CD4-positive, alpha-beta T cell (primary cell): ENCODE measurements at regions of chr1 and their contacts with region 1.

Region 1: DNA sequence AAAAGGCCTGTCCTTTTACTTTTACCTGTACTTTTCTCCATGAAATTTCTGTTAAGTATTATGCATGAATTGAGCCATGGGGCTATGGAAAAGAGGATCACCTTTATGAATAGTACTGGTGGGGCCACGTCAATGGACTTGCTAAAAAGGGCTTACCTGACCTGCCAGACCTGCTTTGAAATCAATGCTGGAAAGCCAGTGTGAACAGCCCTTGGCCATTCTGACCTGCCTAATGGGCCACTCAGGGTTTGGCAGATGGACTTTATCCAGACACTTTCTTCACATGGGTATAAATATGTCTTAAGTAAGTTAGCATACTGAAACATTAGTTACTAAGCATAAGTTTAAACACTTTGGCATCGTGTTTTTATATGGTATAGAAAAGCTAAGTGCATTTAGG is 8.3 kb upstream of the GUK1 start:
- DNase-seq: no peak
- ATAC-seq: no peak
- H3K4me3 ChIP-seq: no peak overlapping the region
- H3K4me3 Mint-ChIP-seq: no peak overlapping the region
- H3K27ac ChIP-seq: no peak overlapping the region
- H3K27ac Mint-ChIP-seq: no peak overlapping the region
- H3K4me1 ChIP-seq: peaks cover 4% of the 10 kb centered on the region
- H3K4me1 Mint-ChIP-seq: peaks cover 5% of the 10 kb centered on the region
- H3K27me3 ChIP-seq: peaks cover 4 to 8% of the 10 kb centered on the region in 2 experiments
- H3K27me3 Mint-ChIP-seq: peaks cover 22% of the 10 kb centered on the region
- CTCF ChIP-seq: no peak

Region 2: DNA sequence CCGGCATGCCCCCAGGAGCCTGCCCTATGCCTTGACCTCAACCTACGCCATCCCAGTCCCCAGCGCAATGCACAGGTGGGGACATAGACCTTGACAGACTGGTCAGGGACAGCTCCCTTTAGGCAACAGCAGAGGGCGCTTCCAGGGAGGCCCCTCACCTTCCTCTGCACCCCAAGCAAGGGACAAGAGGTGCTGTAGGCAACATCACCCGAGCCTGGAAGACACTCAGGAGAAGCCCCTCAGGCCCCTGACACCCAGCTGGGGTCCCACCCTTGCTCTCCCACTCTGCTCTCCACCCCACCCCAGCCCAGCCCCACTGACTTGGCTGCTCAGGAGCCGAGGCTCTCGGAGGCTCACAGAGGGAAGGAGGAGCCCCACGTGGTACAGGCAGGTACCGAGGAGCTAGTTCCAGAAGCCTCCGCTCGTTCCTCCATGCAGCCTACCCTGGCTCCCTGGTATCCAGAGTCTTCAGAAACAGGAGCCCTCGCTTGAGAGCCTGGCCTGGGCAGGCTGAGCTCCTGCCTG is 127.4 kb before region 1 on chr1:
- CTCF ChIA-PET with region 1: interaction called, 4 read pairs
- POLR2A ChIA-PET with region 1: no interaction called
- intact Hi-C with region 1: loop called in 1 of 2 experiments (anchors 5 kb)
- DNase-seq: peak in 5 of 14 experiments; percentile 4 to 39 (median 24)
- ATAC-seq: no peak
- H3K4me3 ChIP-seq: no peak overlapping the region
- H3K4me3 Mint-ChIP-seq: no peak overlapping the region
- H3K27ac ChIP-seq: no peak overlapping the region
- H3K27ac Mint-ChIP-seq: no peak overlapping the region
- H3K4me1 ChIP-seq: peaks cover 27% of the 10 kb centered on the region
- H3K4me1 Mint-ChIP-seq: no peaks in the 10 kb centered on the region
- H3K27me3 ChIP-seq: peaks cover 46 to 58% of the 10 kb centered on the region in 2 experiments
- H3K27me3 Mint-ChIP-seq: peaks cover 70% of the 10 kb centered on the region
- CTCF ChIP-seq: no peak

Region 3: GRCh38 chr1:228180271-228180958 is 48.6 kb after region 1 on chr1:
- CTCF ChIA-PET with region 1: interaction called, 3 read pairs
- POLR2A ChIA-PET with region 1: no interaction called
- intact Hi-C with region 1: loop called in 1 of 2 experiments (anchors 1 kb)
- DNase-seq: peak in 1 of 14 experiments; percentile 52
- ATAC-seq: peak; percentile 69
- H3K4me3 ChIP-seq: no peak overlapping the region
- H3K4me3 Mint-ChIP-seq: no peak overlapping the region
- H3K27ac ChIP-seq: no peak overlapping the region
- H3K27ac Mint-ChIP-seq: peak overlapping the region; percentile 46
- H3K4me1 ChIP-seq: peaks cover 5% of the 10 kb centered on the region
- H3K4me1 Mint-ChIP-seq: peaks cover 2% of the 10 kb centered on the region
- H3K27me3 ChIP-seq: no peaks in the 10 kb centered on the region
- H3K27me3 Mint-ChIP-seq: no peaks in the 10 kb centered on the region
- CTCF ChIP-seq: no peak